SK-N-SH (cell line): ENCODE measurements at regions of chr14 and their contacts with region 1.

Region 1: GRCh38 chr14:69242311-69243224 is 17.4 kb upstream of the GALNT16 start:
- DNase-seq: peak; percentile 83
- H3K4me3 ChIP-seq: no peak overlapping the region
- H3K27ac ChIP-seq: no peak overlapping the region
- H3K4me1 ChIP-seq: peaks cover under 1 to 4% of the 10 kb centered on the region in 2 experiments; a peak in 3 of 4 replicates
- H3K27me3 ChIP-seq: no peaks in the 10 kb centered on the region
- CTCF ChIP-seq: peak; percentile 80
- EP300 ChIP-seq: no peak
- RAD21 ChIP-seq: peak; percentile 86

Region 2: DNA sequence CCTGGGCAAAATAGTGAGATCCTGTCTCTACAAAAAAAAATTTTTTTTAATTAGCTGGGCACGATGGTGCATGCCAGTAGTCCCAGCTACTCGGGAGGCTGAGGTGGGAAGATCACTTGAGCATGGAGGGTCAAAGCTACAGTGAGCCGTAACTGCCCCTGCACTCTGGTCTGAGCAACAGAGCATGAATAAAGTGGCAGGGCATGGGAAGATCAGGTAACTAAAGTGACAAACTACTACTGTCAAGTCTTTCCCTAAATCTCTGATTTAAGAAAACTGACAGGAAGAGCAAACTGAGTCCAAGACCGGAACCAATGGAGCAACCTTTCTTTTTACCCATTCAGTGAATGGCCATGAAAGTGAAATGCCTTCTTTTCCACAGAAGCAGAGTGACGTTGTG is 100.5 kb before region 1 on chr14:
- CTCF ChIA-PET with region 1: no interaction called
- POLR2A ChIA-PET with region 1: no interaction called
- DNase-seq: no peak
- H3K4me3 ChIP-seq: no peak overlapping the region
- H3K27ac ChIP-seq: no peak overlapping the region
- H3K4me1 ChIP-seq: peaks cover 2 to 17% of the 10 kb centered on the region in 2 experiments; a peak in 2 of 4 replicates
- H3K27me3 ChIP-seq: no peaks in the 10 kb centered on the region
- CTCF ChIP-seq: no peak
- EP300 ChIP-seq: no peak
- RAD21 ChIP-seq: no peak

Region 3: DNA sequence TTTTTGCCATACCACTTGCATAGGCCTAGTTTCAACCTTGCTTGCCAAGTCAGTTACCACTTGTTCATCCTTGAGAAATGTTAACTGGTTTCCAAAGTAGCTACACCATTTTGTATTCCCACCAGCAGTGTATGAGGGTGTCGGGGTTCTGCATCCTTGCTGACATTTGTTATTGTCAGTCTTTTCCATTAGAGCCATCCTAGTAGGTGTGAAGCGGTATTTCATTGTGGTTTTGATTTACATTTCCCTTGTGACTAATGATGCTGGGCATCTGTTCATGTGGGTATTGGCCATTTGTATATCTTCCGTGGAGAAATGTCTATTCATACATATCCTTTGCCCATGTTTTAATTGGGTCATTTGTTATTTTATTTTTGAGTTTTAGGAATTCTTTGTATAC is 10.2 kb before region 1 on chr14:
- CTCF ChIA-PET with region 1: interaction called, 15 read pairs
- POLR2A ChIA-PET with region 1: no interaction called
- DNase-seq: no peak
- H3K4me3 ChIP-seq: no peak overlapping the region
- H3K27ac ChIP-seq: no peak overlapping the region
- H3K4me1 ChIP-seq: no peaks in the 10 kb centered on the region; a peak in 1 of 4 replicates
- H3K27me3 ChIP-seq: no peaks in the 10 kb centered on the region
- CTCF ChIP-seq: no peak
- EP300 ChIP-seq: no peak
- RAD21 ChIP-seq: no peak

Region 4: DNA sequence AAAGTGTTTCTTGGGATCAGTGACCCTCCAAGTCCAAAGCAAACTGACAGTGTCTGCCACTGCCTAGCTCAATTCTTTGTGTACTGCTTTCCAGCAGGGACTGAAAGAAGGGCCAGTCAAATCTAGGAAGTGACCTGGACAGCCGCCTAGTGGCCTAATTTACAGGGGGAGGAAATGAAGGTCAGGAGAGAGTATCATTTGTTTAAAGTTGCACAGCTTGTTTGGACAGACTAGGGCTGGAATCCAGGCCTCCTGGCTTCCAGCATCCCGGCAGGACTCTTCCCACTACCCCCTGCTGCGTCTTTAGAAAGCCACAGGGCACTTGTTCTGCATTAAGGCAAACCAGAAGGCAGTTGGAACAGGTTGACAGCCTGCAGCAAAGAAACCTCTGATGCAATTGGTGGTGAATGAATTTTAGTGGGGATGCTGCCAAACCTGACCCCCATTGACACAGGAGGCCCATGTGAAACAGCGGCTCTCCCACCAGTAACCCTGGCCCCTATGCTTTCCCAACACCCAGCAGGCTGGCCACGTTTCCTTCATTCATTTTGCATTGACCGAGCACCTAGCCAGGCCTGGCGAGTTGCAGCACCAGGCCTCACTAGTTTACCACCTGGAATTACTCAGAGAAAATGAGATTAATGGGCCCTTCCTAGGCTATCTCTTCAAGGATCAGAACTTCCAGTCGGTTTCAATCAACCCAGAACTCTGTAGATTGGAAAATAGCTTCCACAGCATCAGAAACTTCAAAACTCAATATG is 45.6 kb after region 1 on chr14:
- CTCF ChIA-PET with region 1: interaction called, 13 read pairs
- POLR2A ChIA-PET with region 1: no interaction called
- DNase-seq: peak; percentile 50
- H3K4me3 ChIP-seq: no peak overlapping the region
- H3K27ac ChIP-seq: peak overlapping the region in 1 of 2 experiments; percentile 54; a peak in 2 of 4 replicates
- H3K4me1 ChIP-seq: peaks cover 0 to 27% of the 10 kb centered on the region in 2 experiments; a peak in 2 of 4 replicates
- H3K27me3 ChIP-seq: no peaks in the 10 kb centered on the region
- CTCF ChIP-seq: peak; percentile 56
- EP300 ChIP-seq: peak in 1 of 2 experiments; percentile 32; a peak in 1 of 4 replicates
- RAD21 ChIP-seq: peak; percentile 46

Region 5: GRCh38 chr14:69363055-69363454 is 120.5 kb after region 1 on chr14:
- CTCF ChIA-PET with region 1: interaction called, 92 read pairs
- POLR2A ChIA-PET with region 1: no interaction called
- DNase-seq: peak; percentile 78
- H3K4me3 ChIP-seq: no peak overlapping the region
- H3K27ac ChIP-seq: no peak overlapping the region
- H3K4me1 ChIP-seq: peaks cover 0 to 7% of the 10 kb centered on the region in 2 experiments; a peak in 1 of 4 replicates
- H3K27me3 ChIP-seq: no peaks in the 10 kb centered on the region
- CTCF ChIP-seq: peak; percentile 54
- EP300 ChIP-seq: no peak
- RAD21 ChIP-seq: peak; percentile 84

Region 6: DNA sequence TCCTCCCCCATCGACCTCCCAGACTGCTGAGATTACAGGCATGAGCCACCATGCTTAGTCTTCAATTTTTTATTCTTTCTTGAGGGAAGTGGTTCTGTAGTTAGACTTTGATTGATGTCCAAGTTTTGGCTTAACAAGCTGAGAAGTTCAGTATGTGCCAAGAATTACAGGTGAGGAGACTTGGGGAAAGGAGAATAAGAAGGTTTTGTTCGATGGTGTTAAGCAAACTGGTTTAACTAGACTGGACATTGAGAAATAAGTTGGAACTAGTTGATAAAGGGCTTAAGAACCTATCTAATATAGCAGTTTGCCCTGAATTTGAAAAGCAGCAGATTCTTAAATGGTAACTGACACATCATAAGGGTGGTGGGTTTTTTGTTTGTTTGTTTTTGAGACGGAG is 209.4 kb after region 1 on chr14:
- CTCF ChIA-PET with region 1: interaction called, 21 read pairs
- POLR2A ChIA-PET with region 1: no interaction called
- DNase-seq: no peak
- H3K4me3 ChIP-seq: no peak overlapping the region
- H3K27ac ChIP-seq: no peak overlapping the region
- H3K4me1 ChIP-seq: no peaks in the 10 kb centered on the region
- H3K27me3 ChIP-seq: no peaks in the 10 kb centered on the region
- CTCF ChIP-seq: no peak
- EP300 ChIP-seq: no peak
- RAD21 ChIP-seq: no peak